ENCODE measurements at regions of chr7 and their contacts with region 1.

Region 1: GRCh38 chr7:112495810-112496462 is 15.1 kb downstream of the LSMEM1 start:
- DNase-seq: peak; percentile 77
- H3K4me3 Mint-ChIP-seq: no peak overlapping the region
- H3K27ac Mint-ChIP-seq: no peak overlapping the region
- H3K4me1 Mint-ChIP-seq: peaks cover 8% of the 10 kb centered on the region
- H3K27me3 Mint-ChIP-seq: peaks cover 24% of the 10 kb centered on the region
- CTCF ChIP-seq: peak; percentile 47

Region 2: DNA sequence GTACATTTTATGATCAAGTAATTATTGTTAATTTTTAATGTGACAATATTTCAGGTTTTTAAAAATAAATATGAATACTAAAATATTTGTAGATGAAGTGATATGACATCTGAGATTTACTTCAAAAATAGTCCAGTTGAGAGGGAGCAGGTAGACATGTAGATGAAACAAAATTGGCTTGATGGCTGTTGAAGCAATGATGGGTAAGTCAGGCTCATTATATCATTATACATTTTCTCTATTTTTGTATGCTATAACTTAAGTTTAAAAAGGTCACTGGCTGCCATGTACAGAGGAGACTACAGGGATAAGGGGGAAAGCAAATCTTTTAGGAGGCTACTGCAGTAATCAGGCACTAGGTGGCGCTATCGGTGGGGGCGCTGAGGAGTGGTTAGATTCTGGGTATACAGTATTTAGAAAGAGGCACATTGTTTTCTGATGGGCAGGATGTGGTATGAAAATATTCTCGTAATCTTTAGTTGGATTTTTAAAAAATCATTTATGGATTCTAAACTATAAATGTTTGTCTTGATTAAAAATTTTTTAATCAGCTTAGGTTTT is 743.8 kb before region 1 on chr7:
- CTCF ChIA-PET with region 1: interaction called, 17 read pairs
- POLR2A ChIA-PET with region 1: no interaction called
- intact Hi-C with region 1: no loop called
- DNase-seq: peak; percentile 75
- H3K4me3 Mint-ChIP-seq: no peak overlapping the region
- H3K27ac Mint-ChIP-seq: no peak overlapping the region
- H3K4me1 Mint-ChIP-seq: peaks cover 6% of the 10 kb centered on the region
- H3K27me3 Mint-ChIP-seq: no peaks in the 10 kb centered on the region
- CTCF ChIP-seq: peak; percentile 81

Region 3: DNA sequence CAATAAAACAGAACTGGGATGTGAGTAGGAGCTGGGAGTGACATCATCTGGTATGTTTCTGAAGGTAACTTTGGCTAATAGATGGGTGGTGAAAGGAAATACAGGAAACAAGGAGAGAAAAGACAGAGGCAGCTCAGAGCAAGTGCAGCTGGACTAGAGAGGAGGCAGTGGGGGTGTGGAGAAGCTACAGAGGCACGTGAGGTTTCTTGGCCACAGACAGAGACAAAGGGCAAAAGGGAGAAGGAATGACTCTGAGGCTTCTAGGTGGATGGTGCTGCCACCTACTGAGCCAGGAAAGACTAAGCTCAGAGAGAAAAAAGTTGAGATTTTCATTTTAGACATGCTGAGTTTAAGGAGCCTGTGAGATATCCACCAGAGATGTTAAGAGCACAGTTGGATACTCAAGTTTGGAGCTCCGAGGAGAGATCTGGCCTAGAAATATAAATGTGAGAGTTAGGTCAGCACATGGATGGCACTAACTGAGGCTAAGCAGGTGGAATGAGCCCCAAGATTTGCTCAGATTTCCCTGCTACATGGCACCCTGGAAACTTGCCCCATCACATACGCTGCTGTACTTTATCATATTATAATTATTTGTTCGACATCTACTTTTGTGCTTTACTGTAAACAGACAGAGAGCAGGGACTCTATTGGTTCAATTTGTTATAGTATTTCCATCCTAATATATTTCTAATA is 640.6 kb before region 1 on chr7:
- CTCF ChIA-PET with region 1: interaction called, 12 read pairs
- POLR2A ChIA-PET with region 1: no interaction called
- intact Hi-C with region 1: no loop called
- DNase-seq: peak; percentile 68
- H3K4me3 Mint-ChIP-seq: no peak overlapping the region
- H3K27ac Mint-ChIP-seq: no peak overlapping the region
- H3K4me1 Mint-ChIP-seq: peaks cover 9% of the 10 kb centered on the region
- H3K27me3 Mint-ChIP-seq: no peaks in the 10 kb centered on the region
- CTCF ChIP-seq: peak; percentile 43

Region 4: GRCh38 chr7:112238852-112239610 is 256.9 kb before region 1 on chr7:
- CTCF ChIA-PET with region 1: no interaction called
- POLR2A ChIA-PET with region 1: no interaction called
- intact Hi-C with region 1: no loop called
- DNase-seq: peak; percentile 75
- H3K4me3 Mint-ChIP-seq: no peak overlapping the region
- H3K27ac Mint-ChIP-seq: no peak overlapping the region
- H3K4me1 Mint-ChIP-seq: peaks cover 16% of the 10 kb centered on the region
- H3K27me3 Mint-ChIP-seq: no peaks in the 10 kb centered on the region
- CTCF ChIP-seq: no peak

Region 5: DNA sequence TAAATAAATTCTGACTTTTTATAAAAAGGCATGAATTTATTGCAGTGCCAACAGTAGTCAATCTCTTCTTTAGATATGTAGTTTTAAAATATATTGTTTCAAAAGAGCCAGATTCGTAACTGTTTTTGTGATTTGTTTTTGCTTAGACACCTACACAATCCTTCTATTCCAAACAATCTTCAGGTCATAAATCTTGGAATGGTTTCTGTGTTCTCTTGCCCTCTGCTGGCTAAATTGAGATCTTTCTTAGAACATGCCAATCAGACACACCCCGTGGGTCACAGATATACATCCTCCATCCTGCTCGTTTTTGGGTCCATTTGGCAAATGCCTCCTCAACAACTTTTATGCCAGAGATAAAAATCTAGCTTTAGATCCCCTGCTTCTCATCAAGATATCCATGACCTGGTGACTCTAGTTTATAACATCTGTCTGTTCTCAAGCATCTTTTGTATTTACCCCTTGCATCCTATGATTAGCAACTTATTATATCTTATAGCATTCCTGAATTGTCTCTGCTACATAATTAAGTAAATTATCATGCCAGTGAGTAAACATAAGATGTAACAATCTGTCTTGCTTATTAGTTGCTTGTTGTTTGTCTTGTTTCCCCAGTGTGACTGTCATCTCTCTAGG is 81.0 kb before region 1 on chr7:
- CTCF ChIA-PET with region 1: interaction called, 14 read pairs
- POLR2A ChIA-PET with region 1: no interaction called
- intact Hi-C with region 1: loop called (anchors 1 kb)
- DNase-seq: peak; percentile 64
- H3K4me3 Mint-ChIP-seq: no peak overlapping the region
- H3K27ac Mint-ChIP-seq: no peak overlapping the region
- H3K4me1 Mint-ChIP-seq: peaks cover 9% of the 10 kb centered on the region
- H3K27me3 Mint-ChIP-seq: no peaks in the 10 kb centered on the region
- CTCF ChIP-seq: peak; percentile 54

Region 6: GRCh38 chr7:112476390-112477052 is 19.4 kb before region 1 on chr7:
- CTCF ChIA-PET with region 1: interaction called, 11 read pairs
- POLR2A ChIA-PET with region 1: no interaction called
- intact Hi-C with region 1: no loop called
- DNase-seq: no peak
- H3K4me3 Mint-ChIP-seq: no peak overlapping the region
- H3K27ac Mint-ChIP-seq: no peak overlapping the region
- H3K4me1 Mint-ChIP-seq: peaks cover under 1% of the 10 kb centered on the region
- H3K27me3 Mint-ChIP-seq: no peaks in the 10 kb centered on the region
- CTCF ChIP-seq: no peak

Region 7: GRCh38 chr7:112510001-112510742 is 14.2 kb after region 1 on chr7:
- CTCF ChIA-PET with region 1: interaction called, 15 read pairs
- POLR2A ChIA-PET with region 1: no interaction called
- intact Hi-C with region 1: no loop called
- DNase-seq: peak; percentile 46
- H3K4me3 Mint-ChIP-seq: no peak overlapping the region
- H3K27ac Mint-ChIP-seq: no peak overlapping the region
- H3K4me1 Mint-ChIP-seq: peaks cover 14% of the 10 kb centered on the region
- H3K27me3 Mint-ChIP-seq: no peaks in the 10 kb centered on the region
- CTCF ChIP-seq: no peak

Measured in MCF 10A (cell line).